Endothelial cell of umbilical vein (primary cell): ENCODE measurements at regions of chr15 and their contacts with region 1.

Region 1: GRCh38 chr15:68666120-68666811 is 87.5 kb downstream of the CORO2B start:
- DNase-seq: peak; percentile 78
- H3K4me3 ChIP-seq: no peak overlapping the region
- H3K27ac ChIP-seq: no peak overlapping the region
- H3K4me1 ChIP-seq: peaks cover 2% of the 10 kb centered on the region
- H3K27me3 ChIP-seq: peaks cover 0 to 2% of the 10 kb centered on the region in 2 experiments
- CTCF ChIP-seq: no peak
- POLR2A ChIP-seq: no peak

Region 2: DNA sequence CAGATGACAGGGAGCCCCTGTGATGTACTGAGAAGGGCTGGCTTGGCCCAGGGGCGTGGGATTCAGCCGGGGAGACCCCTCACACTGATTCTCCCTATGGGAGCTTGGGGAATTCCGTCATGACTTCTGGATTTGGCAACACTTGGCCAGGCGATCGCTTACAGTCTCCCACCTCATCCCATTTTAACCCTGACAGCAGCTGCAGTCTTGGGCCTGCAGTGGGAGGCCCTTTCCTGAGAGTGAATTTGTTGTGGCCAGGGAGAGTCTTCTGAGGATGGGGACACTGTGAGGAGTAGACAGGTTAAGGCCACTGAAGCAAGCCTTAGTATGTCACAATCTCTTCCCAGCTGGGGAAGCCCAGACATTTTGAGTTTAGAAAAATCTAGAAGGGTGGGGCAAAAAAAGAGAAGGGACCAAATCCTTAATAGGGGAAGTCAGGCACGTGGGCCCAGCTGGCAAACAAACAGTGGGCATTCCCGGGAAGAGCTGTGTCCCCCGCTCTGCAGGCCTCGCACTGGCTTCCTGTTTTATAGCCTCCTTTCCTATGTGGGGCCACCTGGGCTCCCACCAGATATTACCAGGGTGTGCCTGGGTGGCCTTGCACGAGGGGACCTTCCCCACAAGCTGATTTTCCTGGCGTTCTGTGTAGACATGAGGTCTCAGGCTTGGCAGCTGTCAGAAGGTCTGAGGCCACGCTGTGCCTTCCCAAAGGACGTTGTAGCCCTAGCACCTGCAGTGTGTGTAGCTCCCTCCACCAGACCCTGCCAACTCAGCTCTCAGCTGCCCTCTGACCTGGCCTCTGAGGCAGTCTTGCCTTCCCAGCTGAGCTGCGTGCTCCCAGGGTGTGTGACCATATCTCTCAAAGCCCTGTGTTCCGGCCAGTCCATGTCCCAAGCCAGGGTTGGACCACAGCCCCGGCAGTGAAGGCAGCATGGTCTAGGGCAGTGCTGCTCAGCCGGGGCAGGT is 324.2 kb before region 1 on chr15:
- CTCF ChIA-PET with region 1: no interaction called
- POLR2A ChIA-PET with region 1: no interaction called
- dilution Hi-C with region 1: no loop called
- intact Hi-C with region 1: no loop called
- DNase-seq: no peak
- H3K4me3 ChIP-seq: no peak overlapping the region
- H3K27ac ChIP-seq: no peak overlapping the region
- H3K4me1 ChIP-seq: peaks cover 12% of the 10 kb centered on the region
- H3K27me3 ChIP-seq: no peaks in the 10 kb centered on the region
- CTCF ChIP-seq: no peak
- POLR2A ChIP-seq: no peak

Region 3: DNA sequence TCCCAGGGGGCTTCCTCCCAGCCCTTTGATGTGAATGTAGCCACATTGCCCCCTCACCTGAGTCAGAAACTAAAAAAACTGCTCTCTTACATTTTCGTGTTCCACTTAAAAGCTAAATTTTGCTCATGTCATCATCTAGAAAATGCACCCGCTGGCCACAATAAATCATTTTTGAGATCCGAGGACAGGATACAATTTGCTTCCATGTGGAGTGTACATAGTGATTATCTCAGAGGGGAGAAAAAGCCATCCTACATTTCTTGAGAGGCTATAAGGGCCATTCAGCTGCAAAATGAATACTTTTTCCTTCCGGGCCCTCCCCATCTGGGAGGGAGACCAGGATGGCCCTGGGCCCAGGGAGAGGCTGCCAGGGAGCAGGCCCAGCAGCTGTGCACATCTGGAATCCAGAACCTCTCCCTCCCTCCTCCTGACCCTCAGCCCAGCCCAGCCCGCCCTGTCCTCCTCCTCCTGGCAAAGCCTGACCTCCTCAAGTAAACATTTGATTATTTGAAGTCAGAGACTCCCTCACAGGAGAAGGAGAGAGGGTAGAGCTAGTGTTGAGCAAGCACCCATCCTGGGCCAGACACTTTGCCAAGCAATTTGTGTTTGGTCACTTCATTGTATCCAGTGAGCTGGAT is 28.4 kb before region 1 on chr15:
- CTCF ChIA-PET with region 1: interaction called, 3 read pairs
- POLR2A ChIA-PET with region 1: no interaction called
- dilution Hi-C with region 1: no loop called
- intact Hi-C with region 1: loop called (anchors 2 kb)
- DNase-seq: no peak
- H3K4me3 ChIP-seq: no peak overlapping the region
- H3K27ac ChIP-seq: no peak overlapping the region
- H3K4me1 ChIP-seq: no peaks in the 10 kb centered on the region
- H3K27me3 ChIP-seq: no peaks in the 10 kb centered on the region
- CTCF ChIP-seq: no peak
- POLR2A ChIP-seq: no peak

Region 4: GRCh38 chr15:68650901-68651709 is 15.2 kb before region 1 on chr15:
- CTCF ChIA-PET with region 1: interaction called, 20 read pairs
- POLR2A ChIA-PET with region 1: no interaction called
- dilution Hi-C with region 1: no loop called
- intact Hi-C with region 1: no loop called
- DNase-seq: peak; percentile 45
- H3K4me3 ChIP-seq: no peak overlapping the region
- H3K27ac ChIP-seq: no peak overlapping the region
- H3K4me1 ChIP-seq: no peaks in the 10 kb centered on the region
- H3K27me3 ChIP-seq: peaks cover 0 to 4% of the 10 kb centered on the region in 2 experiments
- CTCF ChIP-seq: peak; percentile 93 to 96
- POLR2A ChIP-seq: no peak

Region 5: GRCh38 chr15:68730471-68730919 is 64.2 kb after region 1 on chr15:
- CTCF ChIA-PET with region 1: no interaction called
- POLR2A ChIA-PET with region 1: no interaction called
- dilution Hi-C with region 1: no loop called
- intact Hi-C with region 1: no loop called
- DNase-seq: peak; percentile 76
- H3K4me3 ChIP-seq: no peak overlapping the region
- H3K27ac ChIP-seq: no peak overlapping the region
- H3K4me1 ChIP-seq: peaks cover 2% of the 10 kb centered on the region
- H3K27me3 ChIP-seq: peaks cover 9 to 11% of the 10 kb centered on the region in 2 experiments
- CTCF ChIP-seq: peak; percentile 35 to 64
- POLR2A ChIP-seq: no peak

Region 6: DNA sequence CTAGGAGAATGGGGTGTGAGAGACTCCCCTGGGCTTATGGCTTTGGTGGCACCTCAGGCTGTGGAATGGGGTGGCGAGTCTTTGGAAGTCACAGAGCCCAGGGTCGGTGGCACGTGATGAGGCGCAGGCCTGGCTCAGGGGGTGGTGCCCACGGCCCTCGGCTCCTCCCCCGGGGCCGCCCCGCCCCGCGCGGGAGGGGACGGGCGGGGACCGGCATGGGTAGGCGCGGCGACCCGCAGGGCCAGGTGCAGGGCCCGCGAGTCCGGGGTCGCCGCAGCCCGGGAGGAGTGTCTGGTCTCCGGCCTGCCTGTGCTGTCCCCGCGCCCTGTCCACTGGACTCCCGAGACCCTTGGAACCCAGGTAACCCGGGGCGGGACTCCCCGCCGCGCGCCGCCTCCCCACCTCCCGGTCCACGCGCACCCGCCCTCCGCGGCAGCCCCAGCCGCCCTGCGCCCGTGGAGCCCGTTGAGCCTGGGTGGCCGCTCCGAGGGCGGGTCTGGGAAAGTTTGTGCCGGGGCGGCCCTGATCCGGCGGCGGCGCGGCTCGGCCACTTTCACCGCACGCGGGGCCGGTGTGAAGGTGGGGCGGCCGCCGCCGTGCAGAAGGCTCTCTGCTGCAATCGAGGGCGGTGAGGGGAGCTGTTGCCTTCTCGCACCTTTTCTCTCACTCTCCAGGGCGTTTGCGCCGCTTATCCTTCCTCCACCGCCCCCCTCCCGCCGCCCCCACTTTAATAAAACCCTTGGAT is 632.6 kb after region 1 on chr15 and contains the start of gene PAQR5:
- CTCF ChIA-PET with region 1: no interaction called
- POLR2A ChIA-PET with region 1: no interaction called
- dilution Hi-C with region 1: no loop called
- intact Hi-C with region 1: no loop called
- DNase-seq: no peak
- H3K4me3 ChIP-seq: peak within 1 kb of the TSS; percentile 22 to 38 (median 32)
- H3K27ac ChIP-seq: no peak within 1 kb of the TSS
- H3K4me1 ChIP-seq: no peaks in the 10 kb centered on the region
- H3K27me3 ChIP-seq: peaks cover 24 to 27% of the 10 kb centered on the region in 2 experiments
- CTCF ChIP-seq: no peak
- POLR2A ChIP-seq: no peak
- total RNA-seq, gene PAQR5: 0.09 TPM in 1 of 2 replicates, not detected in the other